ENCODE measurements at regions of chr3 and their contacts with region 1.

Region 1: GRCh38 chr3:198080521-198081280 is 120.7 kb downstream of the LMLN start:
- H3K4me3 ChIP-seq: peak overlapping the region; percentile 60
- H3K27ac ChIP-seq: peak overlapping the region; percentile 90; the same call in 1 of the 2 replicates
- H3K4me1 ChIP-seq: no peaks in the 10 kb centered on the region
- CTCF ChIP-seq: no peak; the same call in none of the 2 replicates

Region 2: GRCh38 chr3:197782230-197782629 is 298.5 kb before region 1 on chr3:
- CTCF ChIA-PET with region 1: no interaction called
- POLR2A ChIA-PET with region 1: no interaction called
- H3K4me3 ChIP-seq: no peak overlapping the region
- H3K27ac ChIP-seq: no peak overlapping the region
- H3K4me1 ChIP-seq: no peaks in the 10 kb centered on the region
- CTCF ChIP-seq: no peak

Region 3: GRCh38 chr3:198067416-198067815 is 13.3 kb before region 1 on chr3:
- CTCF ChIA-PET with region 1: interaction called, 17 read pairs
- POLR2A ChIA-PET with region 1: interaction called, 7 read pairs
- H3K4me3 ChIP-seq: no peak overlapping the region
- H3K27ac ChIP-seq: no peak overlapping the region
- H3K4me1 ChIP-seq: no peaks in the 10 kb centered on the region
- CTCF ChIP-seq: no peak

Region 4: DNA sequence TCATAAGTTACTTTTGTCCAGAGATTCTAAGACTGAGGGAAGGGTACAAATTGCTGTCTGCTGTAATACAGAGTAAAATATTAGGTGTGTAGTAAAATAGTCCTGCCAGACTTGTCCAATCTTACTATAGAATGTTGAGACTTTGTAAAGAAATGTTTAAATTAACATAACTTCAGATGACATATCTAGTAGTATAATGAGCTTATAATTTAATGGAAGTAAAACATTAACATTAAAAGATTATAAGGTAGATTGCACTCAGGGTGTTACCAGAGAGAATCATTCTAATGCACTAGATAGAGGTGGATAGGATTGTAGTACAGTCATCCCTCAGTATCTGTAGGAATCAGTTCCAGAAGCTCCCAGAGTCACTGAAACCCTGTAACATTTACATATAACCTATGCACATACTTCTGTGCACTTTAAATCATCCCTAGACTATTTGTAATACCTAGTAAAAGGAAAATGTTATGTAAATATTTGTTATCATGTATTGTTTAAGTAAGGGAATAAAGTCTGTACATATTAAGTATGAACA is 10.2 kb after region 1 on chr3:
- CTCF ChIA-PET with region 1: interaction called, 11 read pairs
- POLR2A ChIA-PET with region 1: no interaction called
- H3K4me3 ChIP-seq: no peak overlapping the region
- H3K27ac ChIP-seq: no peak overlapping the region
- H3K4me1 ChIP-seq: no peaks in the 10 kb centered on the region
- CTCF ChIP-seq: no peak

Measured in HEK293 (cell line).